AG04450 (cell line): ENCODE measurements at regions of chr5 and their contacts with region 1.

Region 1: GRCh38 chr5:16160706-16161105 is 18.9 kb downstream of the MARCHF11 start:
- DNase-seq: peak; percentile 10
- H3K4me3 ChIP-seq: no peak overlapping the region
- H3K27ac ChIP-seq: no peak overlapping the region
- H3K27me3 ChIP-seq: no peaks in the 10 kb centered on the region
- CTCF ChIP-seq: peak; percentile 79

Region 2: GRCh38 chr5:16450163-16450562 is 289.5 kb after region 1 on chr5:
- CTCF ChIA-PET with region 1: interaction called, 77 read pairs
- POLR2A ChIA-PET with region 1: no interaction called
- DNase-seq: no peak
- H3K4me3 ChIP-seq: no peak overlapping the region
- H3K27ac ChIP-seq: no peak overlapping the region
- H3K27me3 ChIP-seq: no peaks in the 10 kb centered on the region
- CTCF ChIP-seq: no peak

Region 3: GRCh38 chr5:16456103-16456832 is 295.6 kb after region 1 on chr5:
- CTCF ChIA-PET with region 1: interaction called, 77 read pairs
- POLR2A ChIA-PET with region 1: no interaction called
- DNase-seq: peak; percentile 36
- H3K4me3 ChIP-seq: no peak overlapping the region
- H3K27ac ChIP-seq: no peak overlapping the region
- H3K27me3 ChIP-seq: no peaks in the 10 kb centered on the region
- CTCF ChIP-seq: peak; percentile 66

Region 4: DNA sequence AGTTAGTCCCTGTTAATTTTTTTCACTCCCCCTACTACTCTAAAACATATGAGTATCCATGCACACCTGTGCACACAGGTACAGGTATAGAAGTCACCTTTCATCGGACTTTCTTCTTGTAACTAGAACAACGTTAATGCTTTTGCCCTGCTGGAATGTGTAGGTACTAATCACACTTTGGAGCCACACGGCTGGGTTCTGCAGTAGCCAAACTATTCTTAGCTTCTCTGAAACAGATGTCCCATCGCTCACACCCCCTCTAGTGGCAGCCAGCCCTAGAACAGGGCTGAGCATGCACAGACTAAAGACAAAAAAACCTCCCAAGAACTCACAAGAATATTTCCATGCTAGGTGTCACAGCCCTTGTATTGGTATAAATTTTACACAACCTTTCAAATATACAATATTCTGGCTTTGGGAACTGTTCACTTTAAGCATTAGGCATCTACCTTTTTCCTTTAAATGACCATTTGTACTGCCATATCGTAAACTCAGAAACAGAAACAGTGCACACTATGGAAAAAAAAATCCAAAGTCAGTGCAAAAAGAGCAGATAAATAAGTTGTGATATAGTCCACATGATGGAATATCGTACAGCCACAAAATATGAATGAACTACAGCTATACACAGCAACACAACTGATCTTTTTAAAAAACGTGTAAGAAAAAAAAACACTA is 392.1 kb after region 1 on chr5:
- CTCF ChIA-PET with region 1: interaction called, 10 read pairs
- POLR2A ChIA-PET with region 1: no interaction called
- DNase-seq: no peak
- H3K4me3 ChIP-seq: no peak overlapping the region
- H3K27ac ChIP-seq: no peak overlapping the region
- H3K27me3 ChIP-seq: peaks cover 6% of the 10 kb centered on the region
- CTCF ChIP-seq: peak; percentile 93

Region 5: GRCh38 chr5:17204133-17204489 is 1043.4 kb after region 1 on chr5:
- CTCF ChIA-PET with region 1: interaction called, 16 read pairs
- POLR2A ChIA-PET with region 1: no interaction called
- DNase-seq: no peak
- H3K4me3 ChIP-seq: no peak overlapping the region
- H3K27ac ChIP-seq: no peak overlapping the region
- H3K27me3 ChIP-seq: no peaks in the 10 kb centered on the region
- CTCF ChIP-seq: no peak